IMR-90 (cell line): ENCODE measurements at regions of chr3 and their contacts with region 1.

Region 1: DNA sequence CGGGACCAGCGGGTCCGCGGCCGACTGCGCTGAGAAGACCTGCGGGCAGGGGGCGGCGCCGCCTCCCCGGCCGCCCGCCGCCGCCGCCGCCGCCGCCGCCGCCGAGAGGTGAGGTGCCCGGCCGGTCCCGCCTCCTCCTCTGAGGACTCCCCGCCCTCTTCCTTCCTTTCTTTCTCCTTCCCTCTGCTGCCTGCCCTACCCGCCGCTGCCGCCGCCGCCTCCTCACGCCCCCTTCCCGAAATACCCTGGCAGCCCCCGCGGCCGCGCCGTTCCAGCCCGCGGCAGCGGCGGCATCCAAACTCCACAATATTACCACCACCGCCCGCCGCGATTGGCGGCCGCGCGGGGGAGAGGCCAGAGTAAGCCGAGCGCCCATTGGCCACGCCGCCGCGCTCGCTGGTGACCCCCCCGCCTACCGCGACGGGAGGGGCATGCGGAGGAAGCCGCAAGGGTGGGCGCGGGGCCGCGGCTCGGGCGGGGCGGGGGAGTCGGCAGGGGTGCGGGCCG is 61.8 kb upstream of the ANKRD28 start:
- DNase-seq: peak; percentile 74
- ATAC-seq: peak; percentile 96
- H3K4me3 ChIP-seq: peak overlapping the region; percentile 88
- H3K27ac ChIP-seq: peak overlapping the region; percentile 50
- H3K4me1 ChIP-seq: no peaks in the 10 kb centered on the region
- H3K27me3 ChIP-seq: no peaks in the 10 kb centered on the region
- CTCF ChIP-seq: no peak
- POLR2A ChIP-seq: no peak
- RAD21 ChIP-seq: no peak

Region 2: GRCh38 chr3:15820911-15821310 is 38.6 kb before region 1 on chr3:
- CTCF ChIA-PET with region 1: interaction called, 3 read pairs
- POLR2A ChIA-PET with region 1: no interaction called
- dilution Hi-C with region 1: no loop called
- in situ Hi-C with region 1: no loop called
- intact Hi-C with region 1: loop called (anchors 5 kb)
- DNase-seq: no peak
- ATAC-seq: no peak
- H3K4me3 ChIP-seq: no peak overlapping the region
- H3K27ac ChIP-seq: no peak overlapping the region
- H3K4me1 ChIP-seq: 0 out of 2 replicates have a peak, but pooled peaks cover under 1% of the 10 kb centered on the region
- H3K27me3 ChIP-seq: no peaks in the 10 kb centered on the region
- CTCF ChIP-seq: peak; percentile 20; the same call in 1 of the 2 replicates
- POLR2A ChIP-seq: no peak
- RAD21 ChIP-seq: no peak; the same call in 1 of the 2 replicates

Region 3: GRCh38 chr3:15982667-15983145 is 123.1 kb after region 1 on chr3:
- CTCF ChIA-PET with region 1: no interaction called
- POLR2A ChIA-PET with region 1: no interaction called
- dilution Hi-C with region 1: no loop called
- in situ Hi-C with region 1: no loop called
- intact Hi-C with region 1: loop called (anchors 5 kb)
- DNase-seq: peak; percentile 96
- ATAC-seq: peak; percentile 92
- H3K4me3 ChIP-seq: peak overlapping the region; percentile 7; the same call in 1 of the 2 replicates
- H3K27ac ChIP-seq: peak overlapping the region; percentile 94
- H3K4me1 ChIP-seq: peaks cover 7% of the 10 kb centered on the region
- H3K27me3 ChIP-seq: no peaks in the 10 kb centered on the region
- CTCF ChIP-seq: no peak
- POLR2A ChIP-seq: no peak
- RAD21 ChIP-seq: no peak; the same call in 1 of the 2 replicates

Region 4: DNA sequence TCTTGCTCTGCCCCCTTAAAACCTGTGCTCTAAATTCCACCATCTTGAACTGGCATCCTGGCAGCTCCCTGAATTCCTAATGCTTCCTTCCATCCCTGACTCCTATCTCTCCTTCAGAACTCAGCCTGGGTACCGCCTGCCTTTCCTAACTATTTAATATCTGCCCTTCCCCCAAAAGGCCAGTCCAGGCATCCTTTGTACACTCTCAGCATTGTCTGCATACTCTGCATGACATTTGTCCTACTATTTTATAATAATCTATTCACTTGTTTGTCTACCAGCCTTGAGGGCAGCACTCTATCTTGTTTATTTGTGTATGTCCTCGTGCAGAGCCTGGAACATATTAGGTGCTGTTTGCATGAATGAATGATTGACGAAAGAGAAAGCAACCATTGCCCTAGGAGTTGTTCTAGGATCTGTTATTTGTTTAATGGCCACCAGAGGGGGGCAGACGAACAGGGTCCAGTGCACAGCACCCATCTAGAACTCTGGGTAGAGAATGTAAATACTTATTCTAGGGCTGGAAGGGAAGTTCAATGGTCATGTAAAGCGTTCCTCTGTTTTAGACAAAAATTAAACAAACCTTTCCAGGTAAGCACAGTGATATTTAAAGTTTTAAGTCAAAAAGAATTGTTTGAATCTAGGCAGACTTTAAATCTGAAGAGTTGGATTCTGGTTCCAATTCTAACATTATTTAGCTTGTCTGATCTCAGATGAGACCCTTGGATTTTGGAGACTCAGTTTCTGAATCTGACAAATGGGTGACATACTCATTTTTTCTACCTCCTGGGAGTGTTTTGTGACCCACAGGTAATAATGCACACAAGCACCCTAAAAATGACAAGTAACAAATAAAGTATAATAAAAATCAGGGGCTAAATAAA is 189.1 kb after region 1 on chr3:
- CTCF ChIA-PET with region 1: no interaction called
- POLR2A ChIA-PET with region 1: no interaction called
- dilution Hi-C with region 1: no loop called
- in situ Hi-C with region 1: no loop called
- intact Hi-C with region 1: loop called (anchors 1 kb)
- DNase-seq: peak; percentile 81
- ATAC-seq: peak; percentile 94
- H3K4me3 ChIP-seq: no peak overlapping the region; the same call in 1 of the 2 replicates
- H3K27ac ChIP-seq: peak overlapping the region; percentile 28; the same call in 1 of the 2 replicates
- H3K4me1 ChIP-seq: peaks cover 12% of the 10 kb centered on the region
- H3K27me3 ChIP-seq: no peaks in the 10 kb centered on the region
- CTCF ChIP-seq: peak; percentile 93
- POLR2A ChIP-seq: peak; percentile 67
- RAD21 ChIP-seq: peak; percentile 100

Region 5: DNA sequence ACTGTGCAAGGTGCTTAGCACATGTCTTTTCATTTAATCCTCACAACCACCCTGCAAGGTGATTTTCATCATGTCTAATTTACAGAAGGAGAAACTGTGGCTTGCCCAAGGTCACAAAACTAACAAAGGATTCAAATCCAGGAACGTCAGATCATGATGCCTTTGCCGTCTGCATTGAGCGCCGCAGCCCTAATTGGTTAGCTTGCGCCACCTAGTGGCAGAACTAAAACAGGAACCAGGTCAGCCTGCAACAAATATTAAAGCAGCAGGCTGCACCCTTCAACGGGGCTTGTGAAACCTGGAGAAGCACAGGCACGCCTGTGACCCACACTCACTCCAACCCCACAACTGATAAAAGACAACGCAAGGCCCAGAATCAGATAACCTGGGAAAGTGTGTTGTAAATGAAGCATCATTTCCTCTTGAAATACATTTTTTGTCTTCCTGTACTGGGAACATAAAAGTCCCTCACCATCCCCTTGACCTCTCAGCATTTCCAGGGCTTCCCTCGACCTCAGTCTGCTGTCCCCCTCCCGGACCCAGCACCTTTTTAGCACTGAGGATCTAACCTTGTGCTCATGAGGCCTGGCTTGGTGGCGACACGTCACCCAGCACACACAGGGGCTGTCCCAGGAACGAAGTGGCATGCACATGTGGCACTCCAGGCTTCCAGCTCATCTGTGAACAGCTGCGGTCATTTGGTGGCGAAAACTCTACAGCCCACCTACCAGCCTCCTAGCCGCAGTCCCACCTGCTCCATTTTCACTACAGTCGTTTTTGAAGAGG is 387.9 kb after region 1 on chr3:
- CTCF ChIA-PET with region 1: interaction called, 3 read pairs
- POLR2A ChIA-PET with region 1: no interaction called
- dilution Hi-C with region 1: no loop called
- in situ Hi-C with region 1: no loop called
- intact Hi-C with region 1: loop called (anchors 1 kb)
- DNase-seq: peak; percentile 84
- ATAC-seq: peak; percentile 88
- H3K4me3 ChIP-seq: no peak overlapping the region
- H3K27ac ChIP-seq: no peak overlapping the region
- H3K4me1 ChIP-seq: peaks cover 13% of the 10 kb centered on the region
- H3K27me3 ChIP-seq: no peaks in the 10 kb centered on the region
- CTCF ChIP-seq: peak; percentile 96
- POLR2A ChIP-seq: peak; percentile 50
- RAD21 ChIP-seq: peak; percentile 99